ENCODE measurements at regions of chr10 and their contacts with region 1.

Region 1: GRCh38 chr10:112446855-112447711 is at the starts of genes VTI1A and ZDHHC6:
- DNase-seq: peak; percentile 94
- H3K4me3 ChIP-seq: peak within 1 kb of the TSS; percentile 96
- H3K27ac ChIP-seq: peak within 1 kb of the TSS; percentile 93
- H3K4me1 ChIP-seq: peaks cover 13% of the 10 kb centered on the region
- H3K27me3 ChIP-seq: no peaks in the 10 kb centered on the region
- total RNA-seq, gene VTI1A: 21.6 and 27.2 TPM in 2 replicates
- total RNA-seq, gene ZDHHC6: 23.6 and 30.4 TPM in 2 replicates

Region 2: GRCh38 chr10:112151524-112152039 is 295.5 kb before region 1 on chr10:
- in situ Hi-C with region 1: loop called (anchors 25 kb)
- DNase-seq: peak; percentile 46
- H3K4me3 ChIP-seq: no peak overlapping the region
- H3K27ac ChIP-seq: no peak overlapping the region
- H3K4me1 ChIP-seq: peaks cover 13% of the 10 kb centered on the region
- H3K27me3 ChIP-seq: no peaks in the 10 kb centered on the region